CD8-positive, alpha-beta T cell (primary cell): ENCODE measurements at regions of chr19 and their contacts with region 1.

Region 1: DNA sequence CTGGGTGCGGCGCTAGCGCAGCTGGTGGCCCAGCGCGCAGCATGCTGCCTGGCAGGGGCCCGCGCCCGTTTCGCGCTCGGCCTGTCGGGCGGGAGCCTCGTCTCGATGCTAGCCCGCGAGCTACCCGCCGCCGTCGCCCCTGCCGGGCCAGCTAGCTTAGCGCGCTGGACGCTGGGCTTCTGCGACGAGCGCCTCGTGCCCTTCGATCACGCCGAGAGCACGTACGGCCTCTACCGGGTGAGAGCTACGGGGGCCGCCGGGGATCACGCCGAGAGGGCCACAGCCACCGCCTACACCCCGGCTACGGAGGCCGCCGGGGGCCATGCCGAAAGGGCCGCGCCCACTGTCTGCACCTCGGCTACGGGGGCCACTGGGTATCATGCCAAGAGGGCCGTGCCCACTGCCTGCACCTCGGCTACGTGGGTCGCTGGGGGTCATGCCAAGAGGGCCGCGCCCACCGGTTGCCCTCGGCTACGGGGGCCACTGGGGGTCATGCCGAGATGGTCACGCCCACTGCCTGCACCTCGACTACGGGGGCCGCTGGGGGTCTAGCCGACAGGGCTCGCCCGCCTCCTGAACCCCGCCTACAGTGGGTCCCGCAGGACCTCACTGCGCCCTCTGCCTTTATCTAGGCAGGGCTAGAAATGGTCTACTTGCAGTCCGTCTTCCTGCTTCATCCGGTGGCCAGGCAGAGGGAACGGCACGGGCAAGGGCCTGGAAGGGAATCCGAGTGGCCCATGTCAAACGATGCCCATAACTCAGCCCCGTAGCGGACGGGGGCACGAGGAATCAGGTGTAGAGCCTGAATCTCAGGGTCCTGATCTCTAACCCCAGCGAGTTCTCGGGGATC is 500 bp downstream of the PGLS start:
- DNase-seq: peak; percentile 77 to 96 (median 89)
- ATAC-seq: peak; percentile 83
- H3K4me3 ChIP-seq: peak overlapping the region; percentile 68 to 96
- H3K4me3 Mint-ChIP-seq: peak overlapping the region; percentile 100
- H3K27ac ChIP-seq: peak overlapping the region; percentile 81 to 86
- H3K27ac Mint-ChIP-seq: peak overlapping the region; percentile 97
- H3K4me1 ChIP-seq: peaks cover 17% of the 10 kb centered on the region
- H3K4me1 Mint-ChIP-seq: peaks cover 36% of the 10 kb centered on the region
- H3K27me3 ChIP-seq: no peaks in the 10 kb centered on the region
- H3K27me3 Mint-ChIP-seq: no peaks in the 10 kb centered on the region
- CTCF ChIP-seq: no peak

Region 2: DNA sequence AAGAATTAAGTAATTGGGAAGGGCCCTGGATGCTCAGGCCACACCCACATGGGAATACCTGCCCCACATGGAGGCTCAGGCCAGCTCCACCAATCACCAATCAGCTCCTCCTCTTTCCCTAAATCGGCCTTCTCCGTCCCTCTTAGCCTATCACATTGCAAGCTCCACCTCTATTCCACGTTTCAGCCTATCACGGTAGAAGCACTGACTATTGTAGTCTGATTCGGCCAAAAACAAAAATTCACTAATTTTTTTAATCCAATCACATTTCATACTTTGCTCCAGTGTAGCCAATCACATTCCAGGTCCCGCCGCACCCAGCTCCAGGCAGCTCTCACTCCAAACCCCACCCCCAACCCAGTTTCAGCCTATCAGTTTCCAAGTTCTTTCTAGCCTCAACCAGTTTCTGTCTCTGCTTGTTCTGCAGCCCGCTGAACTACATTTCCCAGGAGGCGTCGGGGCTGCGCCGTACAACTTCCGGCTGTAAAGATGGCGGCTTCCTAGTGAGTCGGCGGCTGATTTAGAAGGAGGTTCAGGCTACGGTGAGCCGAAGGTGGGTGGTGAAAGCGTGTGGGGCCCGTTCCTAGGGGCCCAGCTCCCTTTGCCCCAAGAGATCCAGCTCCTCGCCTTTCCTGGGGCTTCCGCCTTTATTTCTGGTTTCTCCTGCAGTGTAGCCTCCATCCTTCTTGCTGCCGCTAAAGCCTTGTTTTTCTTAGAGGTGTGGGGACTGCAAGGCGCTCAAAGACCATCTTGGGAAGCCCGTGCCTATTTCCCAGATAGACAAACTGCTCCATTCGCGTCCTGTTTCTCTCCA is 244.8 kb before region 1 on chr19 and contains the start of gene BABAM1:
- CTCF ChIA-PET with region 1: no interaction called
- POLR2A ChIA-PET with region 1: no interaction called
- intact Hi-C with region 1: loop called in 1 of 2 experiments (anchors 5 kb)
- DNase-seq: peak; percentile 81 to 98 (median 92)
- ATAC-seq: peak; percentile 93
- H3K4me3 ChIP-seq: peak within 1 kb of the TSS; percentile 72 to 82
- H3K4me3 Mint-ChIP-seq: peak within 1 kb of the TSS; percentile 79
- H3K27ac ChIP-seq: peak within 1 kb of the TSS; percentile 61 to 77
- H3K27ac Mint-ChIP-seq: peak within 1 kb of the TSS; percentile 63
- H3K4me1 ChIP-seq: peaks cover 14% of the 10 kb centered on the region
- H3K4me1 Mint-ChIP-seq: peaks cover 18% of the 10 kb centered on the region
- H3K27me3 ChIP-seq: no peaks in the 10 kb centered on the region
- H3K27me3 Mint-ChIP-seq: no peaks in the 10 kb centered on the region
- CTCF ChIP-seq: no peak
- total RNA-seq, gene BABAM1: 46.9 to 58.0 TPM

Region 3: GRCh38 chr19:17496337-17496997 is 15.5 kb before region 1 on chr19:
- CTCF ChIA-PET with region 1: interaction called, 24 read pairs
- POLR2A ChIA-PET with region 1: interaction called, 4 read pairs
- intact Hi-C with region 1: loop called in 1 of 2 experiments (anchors 1 kb)
- DNase-seq: peak; percentile 63 to 90 (median 80)
- ATAC-seq: peak; percentile 99
- H3K4me3 ChIP-seq: no peak overlapping the region
- H3K4me3 Mint-ChIP-seq: no peak overlapping the region
- H3K27ac ChIP-seq: no peak overlapping the region
- H3K27ac Mint-ChIP-seq: no peak overlapping the region
- H3K4me1 ChIP-seq: peaks cover 21% of the 10 kb centered on the region
- H3K4me1 Mint-ChIP-seq: peaks cover 27% of the 10 kb centered on the region
- H3K27me3 ChIP-seq: no peaks in the 10 kb centered on the region
- H3K27me3 Mint-ChIP-seq: no peaks in the 10 kb centered on the region
- CTCF ChIP-seq: peak; percentile 90

Region 4: GRCh38 chr19:17530586-17530985 is 18.6 kb after region 1 on chr19:
- CTCF ChIA-PET with region 1: no interaction called
- POLR2A ChIA-PET with region 1: interaction called, 10 read pairs
- intact Hi-C with region 1: no loop called
- DNase-seq: no peak
- ATAC-seq: no peak
- H3K4me3 ChIP-seq: no peak overlapping the region
- H3K4me3 Mint-ChIP-seq: no peak overlapping the region
- H3K27ac ChIP-seq: no peak overlapping the region
- H3K27ac Mint-ChIP-seq: no peak overlapping the region
- H3K4me1 ChIP-seq: peaks cover 13% of the 10 kb centered on the region
- H3K4me1 Mint-ChIP-seq: peaks cover 6% of the 10 kb centered on the region
- H3K27me3 ChIP-seq: no peaks in the 10 kb centered on the region
- H3K27me3 Mint-ChIP-seq: no peaks in the 10 kb centered on the region
- CTCF ChIP-seq: no peak

Region 5: DNA sequence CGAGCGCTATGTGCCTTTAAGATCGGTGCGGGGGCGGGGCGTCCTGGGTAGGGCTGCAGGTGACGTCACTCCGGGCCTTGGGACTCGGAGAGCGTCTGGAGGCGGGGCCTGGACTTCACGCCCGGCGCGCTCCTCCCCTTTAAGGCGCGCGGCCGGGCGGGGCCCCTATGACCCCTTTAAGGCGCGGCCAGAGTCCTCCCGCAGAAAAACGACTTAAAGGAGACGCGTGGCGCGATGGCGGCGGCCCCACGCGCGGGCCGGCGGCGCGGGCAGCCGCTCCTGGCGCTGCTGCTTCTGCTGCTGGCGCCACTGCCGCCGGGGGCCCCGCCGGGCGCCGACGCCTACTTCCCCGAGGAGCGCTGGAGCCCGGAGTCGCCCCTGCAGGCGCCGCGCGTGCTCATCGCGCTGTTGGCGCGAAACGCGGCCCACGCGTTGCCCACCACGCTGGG is 43.6 kb after region 1 on chr19 and contains the start of gene COLGALT1:
- CTCF ChIA-PET with region 1: interaction called, 5 read pairs
- POLR2A ChIA-PET with region 1: interaction called, 5 read pairs
- intact Hi-C with region 1: loop called (anchors 1 kb)
- DNase-seq: peak; percentile 93 to 99 (median 98)
- ATAC-seq: peak; percentile 100
- H3K4me3 ChIP-seq: peak within 1 kb of the TSS; percentile 80 to 84
- H3K4me3 Mint-ChIP-seq: peak within 1 kb of the TSS; percentile 82
- H3K27ac ChIP-seq: peak within 1 kb of the TSS; percentile 49 to 50
- H3K27ac Mint-ChIP-seq: peak within 1 kb of the TSS; percentile 27
- H3K4me1 ChIP-seq: peaks cover 18% of the 10 kb centered on the region
- H3K4me1 Mint-ChIP-seq: peaks cover 26% of the 10 kb centered on the region
- H3K27me3 ChIP-seq: no peaks in the 10 kb centered on the region
- H3K27me3 Mint-ChIP-seq: no peaks in the 10 kb centered on the region
- CTCF ChIP-seq: no peak
- total RNA-seq, gene COLGALT1: 22.7 to 26.3 TPM